GM10248 (cell line): ENCODE measurements at regions of chr7 and their contacts with region 1.

Region 1: DNA sequence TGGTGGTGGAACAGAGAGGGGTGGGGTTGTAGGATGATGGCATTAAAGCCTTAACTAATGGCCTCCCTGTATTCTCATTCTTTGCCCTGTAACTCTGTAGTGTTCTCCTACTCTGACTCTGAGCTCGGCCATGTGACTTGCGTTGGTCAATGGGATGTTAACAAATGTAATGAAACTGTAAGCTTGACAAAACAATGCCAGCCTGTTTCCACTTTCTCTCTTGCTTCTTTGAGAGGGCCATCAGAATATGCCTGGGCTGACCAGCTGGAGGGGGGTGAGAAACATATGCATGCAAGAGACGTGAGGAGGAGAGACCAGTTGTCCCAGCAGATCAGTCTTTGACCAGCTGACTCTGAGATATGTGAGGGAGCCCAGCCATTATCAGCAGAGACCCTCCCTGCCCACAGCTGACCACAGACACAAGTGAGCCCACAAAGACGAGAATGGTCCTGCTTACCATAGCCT is 100.6 kb downstream of the ICA1 start:
- DNase-seq: no peak
- CTCF ChIP-seq: no peak

Region 2: GRCh38 chr7:7920481-7920880 is 240.9 kb before region 1 on chr7:
- CTCF ChIA-PET with region 1: no interaction called
- POLR2A ChIA-PET with region 1: no interaction called
- DNase-seq: peak; percentile 52
- CTCF ChIP-seq: no peak

Region 3: DNA sequence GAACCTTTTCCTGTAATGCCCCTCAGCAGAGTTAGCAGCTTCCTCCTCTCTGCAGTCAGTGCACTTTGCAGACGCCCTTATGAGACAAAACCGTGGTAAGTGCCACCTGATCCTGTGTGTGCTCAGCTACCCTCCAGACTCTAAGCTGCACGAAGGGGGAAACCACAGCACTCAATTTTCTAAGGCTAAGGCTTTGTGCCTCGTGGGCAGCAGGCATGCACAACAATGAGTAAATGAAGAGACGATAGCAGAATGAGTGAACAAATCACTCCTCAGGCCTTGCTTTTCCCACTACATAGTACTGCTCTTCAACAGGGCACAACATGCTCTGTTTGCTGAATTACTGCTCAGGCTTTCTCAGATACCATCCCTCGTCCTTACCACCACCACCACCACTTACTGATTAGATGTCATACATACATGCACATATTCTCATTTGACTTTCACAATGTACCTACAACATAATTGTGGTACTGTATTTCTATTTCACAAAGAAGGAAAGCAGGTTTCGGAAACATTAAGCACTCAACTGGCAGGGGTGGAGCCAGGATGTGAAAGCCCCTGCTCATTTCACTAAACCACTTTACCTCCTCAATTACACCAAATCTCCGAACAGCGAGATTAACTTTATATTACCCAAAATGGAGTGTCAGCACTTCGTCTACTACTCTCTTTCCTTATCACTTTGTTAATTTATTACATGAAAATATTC is 15.1 kb after region 1 on chr7:
- CTCF ChIA-PET with region 1: interaction called, 12 read pairs
- POLR2A ChIA-PET with region 1: no interaction called
- DNase-seq: peak; percentile 41
- CTCF ChIP-seq: no peak

Region 4: DNA sequence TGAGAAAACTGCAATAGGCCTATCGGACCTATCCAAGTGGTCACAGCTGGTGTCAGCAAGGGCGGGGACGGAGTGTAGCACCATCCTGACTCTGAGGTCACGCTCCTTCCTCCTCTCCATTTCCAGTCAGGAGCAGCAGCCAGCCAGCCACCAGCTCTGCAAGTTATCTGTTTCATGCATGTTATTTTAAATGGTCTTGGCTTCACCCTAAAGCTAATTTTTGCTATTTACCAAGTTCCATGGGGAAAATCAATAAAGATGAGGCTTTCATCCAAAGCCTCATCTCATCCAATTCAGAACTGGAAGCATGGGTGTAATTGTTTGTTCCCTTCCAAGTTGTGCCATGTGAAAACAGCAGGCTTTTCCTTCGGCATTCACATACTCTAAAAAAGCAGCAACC is 51.2 kb after region 1 on chr7:
- CTCF ChIA-PET with region 1: no interaction called
- POLR2A ChIA-PET with region 1: no interaction called
- DNase-seq: no peak
- CTCF ChIP-seq: no peak